ENCODE measurements at regions of chr3 and their contacts with region 1.

Region 1: DNA sequence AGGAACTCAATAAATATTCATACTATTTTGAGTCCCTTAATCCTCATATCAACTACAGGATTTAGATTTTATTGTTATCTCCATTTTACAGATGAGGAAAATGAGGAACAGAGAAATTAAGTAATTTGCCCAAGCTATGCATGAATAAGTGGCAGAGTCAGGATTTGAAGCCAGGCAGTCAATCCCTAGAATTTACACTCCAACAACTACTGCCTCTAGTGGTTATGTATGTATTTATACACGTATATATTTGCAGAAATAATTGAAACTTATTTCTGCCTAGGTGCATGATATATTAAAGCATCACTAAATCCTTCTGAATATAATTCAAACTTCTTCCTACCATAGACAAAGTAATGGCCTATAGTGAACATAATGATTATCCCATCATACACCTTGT is 137.4 kb downstream of the SERPINI1 start:
- DNase-seq: no peak
- H3K4me3 ChIP-seq: no peak overlapping the region
- H3K27ac ChIP-seq: no peak overlapping the region
- H3K4me1 ChIP-seq: no peaks in the 10 kb centered on the region
- H3K27me3 ChIP-seq: no peaks in the 10 kb centered on the region
- CTCF ChIP-seq: peak in 1 of 3 experiments; percentile 27; a peak in 1 of 4 replicates
- EP300 ChIP-seq: no peak
- POLR2A ChIP-seq: no peak
- RAD21 ChIP-seq: no peak

Region 2: DNA sequence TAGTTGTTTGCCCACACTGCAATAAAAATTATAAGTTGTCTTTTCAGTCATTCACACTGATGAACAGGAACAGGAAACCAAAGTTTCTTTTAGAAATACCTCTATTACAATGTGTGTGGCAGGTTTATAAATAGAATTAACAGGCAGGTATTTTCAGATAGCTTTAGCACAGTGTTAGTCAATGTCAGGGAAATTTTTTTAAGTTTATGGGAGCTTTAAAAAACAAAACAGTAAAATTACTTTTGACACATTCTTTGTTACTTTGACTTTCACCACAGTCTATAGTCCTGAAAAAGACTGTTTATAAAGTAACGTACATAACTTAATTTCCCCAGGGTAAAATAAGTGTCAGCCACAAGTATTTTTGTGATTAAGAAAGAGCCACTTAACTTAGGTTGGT is 99.4 kb before region 1 on chr3:
- CTCF ChIA-PET with region 1: no interaction called
- POLR2A ChIA-PET with region 1: no interaction called
- DNase-seq: no peak
- H3K4me3 ChIP-seq: no peak overlapping the region
- H3K27ac ChIP-seq: no peak overlapping the region
- H3K4me1 ChIP-seq: no peaks in the 10 kb centered on the region
- H3K27me3 ChIP-seq: no peaks in the 10 kb centered on the region
- CTCF ChIP-seq: no peak
- EP300 ChIP-seq: no peak
- POLR2A ChIP-seq: no peak
- RAD21 ChIP-seq: no peak

Region 3: DNA sequence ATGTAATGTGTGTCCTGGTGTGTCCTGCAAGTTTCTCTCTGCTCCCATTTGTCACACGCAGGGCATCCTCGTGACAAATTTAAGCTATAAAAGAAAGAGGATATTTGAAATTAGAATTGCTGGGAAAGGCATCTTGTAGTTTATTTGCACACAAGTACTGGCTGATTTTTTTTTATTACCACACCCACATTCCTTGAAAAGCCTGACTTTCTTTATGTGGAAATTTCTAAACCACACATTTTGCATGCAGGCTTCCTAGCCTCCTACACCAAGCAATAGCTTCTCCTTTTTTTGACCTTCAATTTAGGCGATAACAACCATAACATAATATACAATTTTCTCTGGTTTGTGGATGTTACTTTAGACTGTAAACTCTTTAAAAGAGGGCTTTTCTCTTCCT is 11.3 kb before region 1 on chr3:
- CTCF ChIA-PET with region 1: interaction called, 21 read pairs
- POLR2A ChIA-PET with region 1: no interaction called
- DNase-seq: no peak
- H3K4me3 ChIP-seq: no peak overlapping the region
- H3K27ac ChIP-seq: no peak overlapping the region
- H3K4me1 ChIP-seq: no peaks in the 10 kb centered on the region
- H3K27me3 ChIP-seq: no peaks in the 10 kb centered on the region
- CTCF ChIP-seq: no peak
- EP300 ChIP-seq: no peak
- POLR2A ChIP-seq: no peak
- RAD21 ChIP-seq: no peak

Region 4: GRCh38 chr3:168088106-168088720 is 215.3 kb after region 1 on chr3:
- CTCF ChIA-PET with region 1: no interaction called
- POLR2A ChIA-PET with region 1: no interaction called
- DNase-seq: no peak
- H3K4me3 ChIP-seq: no peak overlapping the region
- H3K27ac ChIP-seq: no peak overlapping the region
- H3K4me1 ChIP-seq: peaks cover 0 to 3% (median 3%) of the 10 kb centered on the region in 4 experiments; a peak in 3 of 7 replicates
- H3K27me3 ChIP-seq: no peaks in the 10 kb centered on the region
- CTCF ChIP-seq: peak; percentile 40 to 69 (median 51)
- EP300 ChIP-seq: no peak
- POLR2A ChIP-seq: no peak
- RAD21 ChIP-seq: peak; percentile 10 to 37; a peak in 2 of 4 replicates